PC-3 (cell line): ENCODE measurements at regions of chr17 and their contacts with region 1.

Region 1: DNA sequence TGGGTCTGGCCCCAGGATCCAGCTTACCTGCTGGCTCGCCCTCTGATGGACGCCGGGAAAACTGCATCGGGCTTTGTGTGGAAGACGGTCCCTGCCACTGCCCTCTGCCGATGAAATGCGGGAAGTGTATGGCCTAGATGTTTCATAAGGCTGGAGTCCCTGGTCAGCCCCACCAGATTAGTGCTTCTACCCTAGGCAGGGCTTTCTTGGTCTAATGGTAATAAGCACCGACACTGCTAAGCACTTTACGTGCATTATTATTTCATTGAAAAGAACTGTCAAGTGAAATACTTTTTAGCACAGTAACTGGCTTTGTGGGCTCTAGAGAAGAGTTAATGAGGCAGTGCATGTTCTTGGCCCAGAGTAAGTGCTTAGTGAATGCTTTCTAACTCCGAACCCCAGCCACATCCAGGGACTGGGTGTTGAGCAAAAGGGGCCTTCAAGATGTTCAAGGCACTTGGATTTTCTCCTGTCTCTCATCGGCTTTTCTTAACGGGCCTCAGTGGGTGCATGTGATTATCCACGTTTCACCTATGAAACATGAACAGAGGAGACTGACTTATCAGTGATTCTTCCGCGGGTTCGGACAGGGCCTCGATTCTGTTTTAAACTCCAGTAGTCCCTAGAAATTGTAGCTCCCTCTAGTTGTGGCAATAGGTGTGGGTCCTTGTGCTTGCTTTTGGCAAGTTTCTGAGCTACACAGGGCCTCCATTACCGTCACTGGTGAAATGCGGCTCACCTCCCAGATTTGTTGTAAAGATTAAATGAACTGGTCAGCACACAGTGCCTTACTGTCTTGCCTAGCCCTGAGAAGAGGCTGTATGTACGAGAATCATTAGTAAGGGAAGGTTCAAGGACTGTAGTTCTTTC is 6.6 kb downstream of the TRAF4 start:
- DNase-seq: peak; percentile 90
- ATAC-seq: peak; percentile 42
- H3K4me3 ChIP-seq: no peak overlapping the region
- H3K27ac ChIP-seq: no peak overlapping the region
- H3K4me1 ChIP-seq: peaks cover 24% of the 10 kb centered on the region
- H3K27me3 ChIP-seq: no peaks in the 10 kb centered on the region
- CTCF ChIP-seq: peak; percentile 92

Region 2: GRCh38 chr17:28878981-28879380 is 128.6 kb after region 1 on chr17:
- CTCF ChIA-PET with region 1: no interaction called
- POLR2A ChIA-PET with region 1: interaction called, 16 read pairs
- intact Hi-C with region 1: no loop called
- DNase-seq: peak; percentile 52
- ATAC-seq: peak; percentile 61
- H3K4me3 ChIP-seq: no peak overlapping the region
- H3K27ac ChIP-seq: no peak overlapping the region
- H3K4me1 ChIP-seq: 0 out of 2 replicates have a peak, but pooled peaks cover 4% of the 10 kb centered on the region
- H3K27me3 ChIP-seq: no peaks in the 10 kb centered on the region
- CTCF ChIP-seq: peak; percentile 55; the same call in 1 of the 2 replicates